Activated B cell treated with CpG ODN at 0.5 μM for 24 hours (primary cell): ENCODE measurements at regions of chr18 and their contacts with region 1.

Region 1: GRCh38 chr18:62239475-62239874 is 52.4 kb downstream of the RELCH start:
- DNase-seq: no peak
- ATAC-seq: no peak
- H3K4me3 Mint-ChIP-seq: no peak overlapping the region
- H3K27ac Mint-ChIP-seq: no peak overlapping the region
- H3K4me1 Mint-ChIP-seq: no peaks in the 10 kb centered on the region
- H3K27me3 Mint-ChIP-seq: no peaks in the 10 kb centered on the region
- CTCF ChIP-seq: no peak

Region 2: DNA sequence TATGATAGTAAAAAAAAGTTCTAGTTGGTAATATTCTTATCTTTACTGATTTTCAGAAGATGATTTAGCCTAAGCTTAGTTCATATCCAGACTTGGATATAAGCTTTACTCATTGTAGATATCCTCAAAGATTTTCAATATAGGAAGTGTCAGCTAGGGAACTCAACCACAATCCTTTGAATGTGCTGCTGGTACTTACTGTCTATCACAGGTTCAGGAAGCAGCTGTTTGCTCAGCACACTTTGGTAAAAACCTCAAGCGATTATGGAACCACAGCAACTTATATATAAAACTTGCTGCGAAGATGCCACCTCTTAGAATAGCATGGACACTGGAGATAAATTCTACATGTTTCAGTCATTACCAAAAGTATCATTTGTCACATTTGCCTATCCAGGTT is 25.5 kb after region 1 on chr18:
- CTCF ChIA-PET with region 1: no interaction called
- POLR2A ChIA-PET with region 1: no interaction called
- intact Hi-C with region 1: loop called (anchors 5 kb)
- DNase-seq: no peak
- ATAC-seq: no peak
- H3K4me3 Mint-ChIP-seq: no peak overlapping the region
- H3K27ac Mint-ChIP-seq: no peak overlapping the region
- H3K4me1 Mint-ChIP-seq: peaks cover 3% of the 10 kb centered on the region
- H3K27me3 Mint-ChIP-seq: no peaks in the 10 kb centered on the region
- CTCF ChIP-seq: no peak